MCF 10A (cell line): ENCODE measurements at regions of chr12 and their contacts with region 1.

Region 1: DNA sequence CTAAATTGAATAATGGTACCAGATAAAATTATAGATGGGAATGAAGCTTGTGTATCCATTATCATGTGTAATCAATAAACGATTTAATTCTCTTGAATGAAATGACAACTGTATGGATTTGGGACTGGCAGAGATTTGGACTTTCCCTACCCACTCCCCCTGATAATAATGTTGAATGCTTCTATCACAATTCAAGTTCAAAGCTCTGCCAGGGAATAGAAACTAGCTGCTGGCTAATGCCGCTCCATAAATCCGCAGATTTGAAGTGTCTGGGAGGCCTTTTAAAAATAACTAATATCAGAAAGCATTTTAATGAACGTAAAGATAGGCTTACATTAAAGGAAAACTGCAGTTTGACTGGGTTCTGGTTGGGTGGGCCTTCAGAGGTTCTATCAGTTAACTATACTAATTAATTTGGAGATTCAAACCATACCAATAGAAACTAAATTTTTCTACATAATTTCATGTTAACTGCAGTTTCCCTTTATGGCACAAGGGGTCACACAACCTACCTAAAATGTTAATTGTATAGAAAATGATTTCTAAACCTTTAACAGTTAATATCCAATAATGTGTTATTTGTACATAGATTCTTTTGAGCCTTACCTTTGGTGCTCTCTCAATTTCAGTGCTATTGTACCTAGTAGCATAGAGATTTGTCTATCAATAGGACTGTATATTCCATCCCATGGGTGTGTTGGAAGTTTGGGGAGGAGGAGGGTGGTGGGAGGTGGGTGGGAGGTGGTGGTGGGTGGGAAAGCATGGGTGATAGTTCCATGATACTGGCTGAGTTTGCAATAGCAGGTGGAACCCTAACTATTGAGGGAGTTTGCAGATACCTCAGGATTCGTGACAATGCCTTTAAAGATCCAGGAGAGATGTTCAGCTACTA is 4.9 kb downstream of the HNRNPA1 start:
- DNase-seq: no peak
- H3K4me3 Mint-ChIP-seq: no peak overlapping the region
- H3K27ac Mint-ChIP-seq: no peak overlapping the region
- H3K4me1 Mint-ChIP-seq: peaks cover 38% of the 10 kb centered on the region
- H3K27me3 Mint-ChIP-seq: no peaks in the 10 kb centered on the region
- CTCF ChIP-seq: peak; percentile 5

Region 2: DNA sequence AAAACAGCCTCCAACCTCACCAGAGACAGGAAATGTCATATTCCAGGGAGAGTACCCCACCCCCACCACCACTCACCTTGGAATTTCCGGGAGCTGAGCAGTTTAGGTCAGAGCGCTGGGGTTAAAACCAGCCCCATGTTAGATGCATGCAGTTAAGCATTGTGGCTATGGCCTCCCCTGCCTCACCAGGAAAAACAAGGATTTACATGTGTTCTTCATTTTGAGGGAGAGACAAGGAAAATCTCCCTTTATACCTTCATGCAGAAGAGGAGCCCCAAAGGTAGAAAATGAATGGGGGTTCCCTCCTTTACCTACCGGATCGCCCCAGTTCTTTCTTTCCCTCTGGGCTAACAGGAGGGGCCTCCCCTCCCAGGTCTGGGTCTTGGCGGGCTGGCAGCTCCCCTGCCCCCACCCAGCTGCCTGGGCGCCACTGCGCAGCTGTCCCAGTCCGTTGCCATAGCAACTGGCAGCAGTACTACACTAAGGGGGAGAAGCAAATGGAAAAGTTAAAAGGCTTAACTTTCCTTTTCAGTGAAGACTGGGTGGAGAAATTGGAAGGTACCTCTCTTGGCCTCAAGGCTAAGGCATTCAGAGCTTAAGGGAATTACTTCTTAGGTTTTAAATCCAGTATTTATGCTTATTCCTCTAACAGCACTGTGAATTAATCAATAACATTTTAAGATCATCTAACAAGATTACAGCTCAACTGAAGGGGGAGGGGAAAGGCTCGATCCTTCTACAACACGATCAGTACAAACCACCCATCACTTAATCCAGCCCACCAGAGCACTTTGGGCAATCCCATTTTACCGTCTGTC is 26.0 kb before region 1 on chr12:
- CTCF ChIA-PET with region 1: interaction called, 4 read pairs
- POLR2A ChIA-PET with region 1: interaction called, 99 read pairs
- intact Hi-C with region 1: loop called (anchors 2 kb)
- DNase-seq: peak; percentile 76
- H3K4me3 Mint-ChIP-seq: peak overlapping the region; percentile 63
- H3K27ac Mint-ChIP-seq: peak overlapping the region; percentile 83
- H3K4me1 Mint-ChIP-seq: peaks cover 14% of the 10 kb centered on the region
- H3K27me3 Mint-ChIP-seq: no peaks in the 10 kb centered on the region
- CTCF ChIP-seq: no peak

Region 3: DNA sequence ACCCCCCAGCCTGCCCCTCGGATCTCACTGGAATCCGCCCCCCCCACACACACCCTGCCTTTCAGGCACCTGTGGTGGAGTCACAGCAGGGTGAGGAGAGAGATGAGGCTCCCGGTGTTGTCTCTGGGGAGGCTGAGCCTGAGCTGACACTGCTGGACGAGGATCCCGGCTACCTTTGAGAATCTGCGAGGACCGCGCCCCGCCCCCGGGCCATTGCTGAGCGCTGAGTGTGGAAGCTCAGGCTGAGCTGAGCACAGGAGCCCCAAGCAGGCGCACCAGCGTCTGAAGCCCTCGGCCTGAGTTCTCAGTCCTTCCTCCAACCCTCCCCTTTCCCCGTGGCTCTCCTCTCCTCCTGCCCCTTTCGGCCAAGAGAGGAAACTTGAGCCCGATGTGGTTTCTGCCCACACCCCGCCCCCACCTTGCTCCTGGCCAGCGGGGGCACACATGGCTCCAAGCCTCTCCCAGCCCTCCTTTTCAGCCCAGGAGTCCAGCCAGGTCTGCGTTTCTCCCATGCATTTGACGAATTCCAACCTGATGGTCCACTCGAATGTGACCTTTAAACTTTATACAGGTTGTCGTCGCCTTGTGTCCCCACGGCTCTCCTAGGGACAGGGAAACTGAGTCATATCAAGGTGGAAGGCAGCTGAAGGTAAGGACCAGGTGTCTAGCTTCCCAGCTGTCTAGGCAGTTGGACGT is 15.5 kb after region 1 on chr12 and contains the start of gene NFE2:
- CTCF ChIA-PET with region 1: interaction called, 9 read pairs
- POLR2A ChIA-PET with region 1: interaction called, 34 read pairs
- intact Hi-C with region 1: no loop called
- DNase-seq: peak; percentile 79
- H3K4me3 Mint-ChIP-seq: peak within 1 kb of the TSS; percentile 4
- H3K27ac Mint-ChIP-seq: peak within 1 kb of the TSS; percentile 6
- H3K4me1 Mint-ChIP-seq: peaks cover 46% of the 10 kb centered on the region
- H3K27me3 Mint-ChIP-seq: no peaks in the 10 kb centered on the region
- CTCF ChIP-seq: no peak
- total RNA-seq, gene NFE2: 0.40 and 0.64 TPM in 2 replicates

Region 4: GRCh38 chr12:54306925-54307741 is 21.7 kb after region 1 on chr12:
- CTCF ChIA-PET with region 1: interaction called, 3 read pairs
- POLR2A ChIA-PET with region 1: interaction called, 34 read pairs
- intact Hi-C with region 1: no loop called
- DNase-seq: peak; percentile 99
- H3K4me3 Mint-ChIP-seq: no peak overlapping the region
- H3K27ac Mint-ChIP-seq: no peak overlapping the region
- H3K4me1 Mint-ChIP-seq: peaks cover 34% of the 10 kb centered on the region
- H3K27me3 Mint-ChIP-seq: no peaks in the 10 kb centered on the region
- CTCF ChIP-seq: no peak